Activated T-helper 1 cell treated with anti-CD3 and anti-CD28 coated beads, Interleukin-12 subunit alpha, Interleukin-12 subunit beta, Interleukin-2, Interleukin-4 antibody, amounts not matched to agents 30 ng/mL and 10 ng/mL and 1 ng/mL, durations not matched to agents 14 hours and 24 hours and 36 hours (primary cell): ENCODE measurements at regions of chr1 and their contacts with region 1.

Region 1: GRCh38 chr1:44631647-44632539 is 42.4 kb downstream of the TMEM53 start:
- DNase-seq: peak; percentile 86
- H3K4me3 Mint-ChIP-seq: peak overlapping the region; percentile 91
- H3K27ac Mint-ChIP-seq: peak overlapping the region; percentile 97
- H3K4me1 Mint-ChIP-seq: peaks cover 40% of the 10 kb centered on the region
- H3K27me3 Mint-ChIP-seq: peaks cover 2% of the 10 kb centered on the region

Region 2: DNA sequence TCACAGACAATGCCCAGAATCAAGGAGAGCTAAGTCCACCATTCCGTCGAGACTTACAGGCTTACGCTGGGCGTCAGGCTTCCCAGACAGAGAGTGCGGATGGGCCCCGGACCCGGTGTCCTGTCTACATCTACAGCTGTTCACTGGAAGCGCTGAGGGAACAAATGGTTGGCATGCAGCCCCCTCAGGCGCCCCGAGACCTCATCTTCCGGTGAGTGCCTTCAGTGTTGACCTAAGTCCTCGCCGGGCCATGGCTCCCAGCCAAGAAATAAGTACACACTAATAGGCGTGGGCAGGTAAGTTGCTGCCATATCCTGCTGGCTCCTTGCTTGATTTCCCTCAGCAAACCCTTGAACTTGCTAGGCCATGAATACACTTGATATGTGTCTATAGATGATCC is 1204.4 kb before region 1 on chr1:
- intact Hi-C with region 1: loop called (anchors 5 kb)
- DNase-seq: no peak
- H3K4me3 Mint-ChIP-seq: no peak overlapping the region
- H3K27ac Mint-ChIP-seq: no peak overlapping the region
- H3K4me1 Mint-ChIP-seq: peaks cover 10% of the 10 kb centered on the region
- H3K27me3 Mint-ChIP-seq: no peaks in the 10 kb centered on the region

Region 3: GRCh38 chr1:44354840-44355581 is 276.9 kb before region 1 on chr1 and contains the start of gene ERI3:
- intact Hi-C with region 1: loop called (anchors 1 kb)
- DNase-seq: peak; percentile 95
- H3K4me3 Mint-ChIP-seq: peak within 1 kb of the TSS; percentile 93
- H3K27ac Mint-ChIP-seq: peak within 1 kb of the TSS; percentile 88
- H3K4me1 Mint-ChIP-seq: peaks cover 34% of the 10 kb centered on the region
- H3K27me3 Mint-ChIP-seq: no peaks in the 10 kb centered on the region
- total RNA-seq, gene ERI3: 51.4 and 55.4 TPM in 2 replicates

Region 4: GRCh38 chr1:44571712-44572571 is 60.0 kb before region 1 on chr1:
- intact Hi-C with region 1: no loop called
- DNase-seq: no peak
- H3K4me3 Mint-ChIP-seq: no peak overlapping the region
- H3K27ac Mint-ChIP-seq: no peak overlapping the region
- H3K4me1 Mint-ChIP-seq: no peaks in the 10 kb centered on the region
- H3K27me3 Mint-ChIP-seq: peaks cover 10% of the 10 kb centered on the region

Region 5: GRCh38 chr1:44714944-44715571 is 83.2 kb after region 1 on chr1:
- intact Hi-C with region 1: loop called (anchors 2 kb)
- DNase-seq: peak; percentile 63
- H3K4me3 Mint-ChIP-seq: peak overlapping the region; percentile 52
- H3K27ac Mint-ChIP-seq: peak overlapping the region; percentile 35
- H3K4me1 Mint-ChIP-seq: peaks cover 44% of the 10 kb centered on the region
- H3K27me3 Mint-ChIP-seq: peaks cover 8% of the 10 kb centered on the region

Region 6: GRCh38 chr1:44724955-44725698 is 93.2 kb after region 1 on chr1:
- intact Hi-C with region 1: no loop called
- DNase-seq: no peak
- H3K4me3 Mint-ChIP-seq: peak overlapping the region; percentile 85
- H3K27ac Mint-ChIP-seq: peak overlapping the region; percentile 77
- H3K4me1 Mint-ChIP-seq: peaks cover 59% of the 10 kb centered on the region
- H3K27me3 Mint-ChIP-seq: no peaks in the 10 kb centered on the region